Ovary (tissue), 10 donors: ENCODE measurements at regions of chr1 and their contacts with region 1.

Region 1: GRCh38 chr1:213425376-213426030 is 374.5 kb downstream of the RPS6KC1 start:
- DNase-seq: no peak
- H3K4me3 ChIP-seq: no peak overlapping the region
- H3K27ac ChIP-seq: no peak overlapping the region
- H3K4me1 ChIP-seq: no peaks in the 10 kb centered on the region
- H3K27me3 ChIP-seq: no peaks in the 10 kb centered on the region
- CTCF ChIP-seq: no peak
- EP300 ChIP-seq: no peak
- POLR2A ChIP-seq: no peak

Region 2: DNA sequence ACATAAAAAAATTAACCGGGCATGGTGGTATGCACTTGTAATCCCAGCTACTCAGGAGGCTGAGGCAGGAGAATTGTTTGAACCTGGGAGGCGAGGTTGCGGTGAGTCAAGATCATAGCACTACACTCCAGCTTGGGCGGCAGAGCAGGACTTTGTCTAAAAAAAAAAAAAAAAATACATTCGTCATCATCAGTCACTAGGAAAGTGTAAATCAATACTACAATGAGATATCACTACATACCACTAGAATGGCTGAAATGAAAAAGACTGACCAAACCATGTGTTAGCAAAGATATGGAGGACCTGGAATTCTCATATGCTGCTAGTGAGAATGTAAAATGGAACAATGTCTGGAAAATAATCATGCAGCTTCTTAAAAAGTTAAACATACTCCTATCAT is 587.4 kb before region 1 on chr1:
- intact Hi-C with region 1: no loop called
- DNase-seq: no peak
- H3K4me3 ChIP-seq: no peak overlapping the region
- H3K27ac ChIP-seq: no peak overlapping the region
- H3K4me1 ChIP-seq: no peaks in the 10 kb centered on the region
- H3K27me3 ChIP-seq: no peaks in the 10 kb centered on the region
- CTCF ChIP-seq: no peak
- EP300 ChIP-seq: no peak
- POLR2A ChIP-seq: no peak

Region 3: DNA sequence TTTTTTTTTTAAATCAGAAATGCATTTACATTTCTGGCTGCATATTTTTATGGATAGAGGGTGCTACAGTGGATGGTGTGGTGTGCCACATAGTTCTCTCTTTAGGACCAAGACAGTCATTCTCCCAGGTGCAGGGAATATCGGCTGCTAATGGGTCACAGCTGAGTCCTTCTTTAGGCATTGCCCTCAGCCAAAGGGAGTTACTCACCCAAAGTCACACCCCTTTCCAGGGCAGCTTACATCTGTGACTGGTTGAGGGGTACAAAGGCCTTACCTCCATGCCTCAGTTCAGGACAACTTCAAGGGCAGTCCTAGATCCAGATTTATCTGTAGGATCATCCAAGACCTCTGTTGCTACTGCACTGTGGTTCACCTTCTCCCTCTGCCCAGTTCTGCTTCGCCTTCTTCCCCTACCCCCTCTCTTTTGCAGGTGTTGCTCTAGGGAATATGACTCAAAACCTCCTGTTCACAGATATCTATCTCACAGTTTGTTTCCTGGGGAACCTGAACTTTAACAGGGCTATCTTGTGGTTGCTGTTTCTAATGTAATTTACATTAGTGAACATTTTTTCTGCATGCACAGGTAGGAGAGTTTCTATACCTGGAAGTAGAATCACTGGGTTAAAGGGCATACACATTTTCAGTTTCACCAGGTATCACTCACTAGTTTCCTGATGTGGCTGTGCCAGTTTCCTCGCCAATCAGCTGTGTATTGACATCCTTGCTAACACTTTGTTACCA is 39.4 kb after region 1 on chr1:
- intact Hi-C with region 1: no loop called
- DNase-seq: no peak
- H3K4me3 ChIP-seq: no peak overlapping the region
- H3K27ac ChIP-seq: no peak overlapping the region
- H3K4me1 ChIP-seq: no peaks in the 10 kb centered on the region
- H3K27me3 ChIP-seq: no peaks in the 10 kb centered on the region
- CTCF ChIP-seq: no peak
- EP300 ChIP-seq: no peak
- POLR2A ChIP-seq: no peak

Region 4: GRCh38 chr1:213484758-213485157 is 59.3 kb after region 1 on chr1:
- intact Hi-C with region 1: loop called in 1 of 4 experiments (anchors 5 kb)
- DNase-seq: no peak
- H3K4me3 ChIP-seq: no peak overlapping the region
- H3K27ac ChIP-seq: no peak overlapping the region
- H3K4me1 ChIP-seq: no peaks in the 10 kb centered on the region
- H3K27me3 ChIP-seq: no peaks in the 10 kb centered on the region
- CTCF ChIP-seq: no peak
- EP300 ChIP-seq: no peak
- POLR2A ChIP-seq: no peak